OCI-LY7 (cell line): ENCODE measurements at regions of chr6 and their contacts with region 1.

Region 1: GRCh38 chr6:33585403-33586107 is 5.5 kb upstream of the BAK1 start:
- DNase-seq: peak; percentile 93
- H3K4me3 ChIP-seq: peak overlapping the region; percentile 45
- H3K27ac ChIP-seq: peak overlapping the region; percentile 7
- H3K4me1 ChIP-seq: peaks cover 48% of the 10 kb centered on the region
- CTCF ChIP-seq: peak; percentile 97

Region 2: DNA sequence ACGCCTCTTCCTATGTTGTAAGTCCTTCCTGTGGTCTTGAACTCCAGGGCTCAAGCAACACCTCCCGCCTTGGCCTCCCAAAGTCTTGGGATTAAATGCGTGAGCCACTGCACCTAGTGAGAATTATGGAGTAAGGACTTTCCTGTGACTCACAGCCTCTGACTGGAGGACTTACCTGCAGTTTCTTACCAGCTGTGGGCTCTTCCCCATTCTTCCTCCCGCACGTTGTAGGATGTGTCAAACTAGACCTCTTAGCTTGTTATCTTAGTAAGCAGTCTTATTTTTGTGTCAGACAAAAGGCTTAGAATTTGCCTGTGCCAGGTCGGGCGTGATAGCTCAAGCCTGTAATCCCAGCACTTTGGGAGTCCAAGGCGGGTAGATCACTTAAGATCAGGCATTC is 36.4 kb before region 1 on chr6:
- CTCF ChIA-PET with region 1: no interaction called
- POLR2A ChIA-PET with region 1: no interaction called
- intact Hi-C with region 1: no loop called
- DNase-seq: no peak
- H3K4me3 ChIP-seq: no peak overlapping the region
- H3K27ac ChIP-seq: no peak overlapping the region
- H3K4me1 ChIP-seq: peaks cover 14% of the 10 kb centered on the region
- CTCF ChIP-seq: no peak

Region 3: GRCh38 chr6:33607784-33608161 is 22.2 kb after region 1 on chr6:
- CTCF ChIA-PET with region 1: interaction called, 24 read pairs
- POLR2A ChIA-PET with region 1: interaction called, 4 read pairs
- intact Hi-C with region 1: loop called (anchors 2 kb)
- DNase-seq: peak; percentile 68
- H3K4me3 ChIP-seq: no peak overlapping the region
- H3K27ac ChIP-seq: no peak overlapping the region
- H3K4me1 ChIP-seq: peaks cover 20% of the 10 kb centered on the region
- CTCF ChIP-seq: peak; percentile 84

Region 4: DNA sequence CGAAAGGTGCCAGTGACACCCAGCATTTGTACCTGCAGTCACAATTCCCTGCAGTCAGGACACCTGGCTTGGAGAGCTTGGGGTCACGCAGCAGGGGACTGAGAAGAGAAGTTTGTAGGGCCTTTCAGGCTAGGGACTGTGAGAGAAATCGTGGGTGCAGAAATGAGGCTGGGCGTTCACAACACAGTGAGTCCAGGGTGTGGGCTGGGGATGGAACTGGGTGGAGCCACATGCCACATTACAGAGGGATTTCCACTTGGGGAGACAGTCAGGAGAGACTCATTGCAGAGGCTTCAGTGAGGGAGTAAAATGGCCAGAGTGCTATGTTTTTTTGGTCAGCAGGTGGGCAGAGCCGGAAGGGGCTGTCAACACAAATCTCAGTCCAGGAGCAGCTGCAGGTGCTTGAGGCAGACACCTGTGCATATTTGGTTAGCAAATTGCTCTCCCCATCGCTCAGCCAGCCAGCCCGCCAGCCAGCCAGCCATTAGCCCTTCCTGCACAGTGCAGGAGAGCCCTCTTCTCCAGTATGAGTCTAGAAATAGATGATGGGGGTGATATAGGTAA is 42.9 kb after region 1 on chr6:
- CTCF ChIA-PET with region 1: no interaction called
- POLR2A ChIA-PET with region 1: interaction called, 4 read pairs
- intact Hi-C with region 1: loop called (anchors 2 kb)
- DNase-seq: peak; percentile 85
- H3K4me3 ChIP-seq: peak overlapping the region; percentile 54
- H3K27ac ChIP-seq: peak overlapping the region; percentile 85
- H3K4me1 ChIP-seq: peaks cover 88% of the 10 kb centered on the region
- CTCF ChIP-seq: no peak

Region 5: DNA sequence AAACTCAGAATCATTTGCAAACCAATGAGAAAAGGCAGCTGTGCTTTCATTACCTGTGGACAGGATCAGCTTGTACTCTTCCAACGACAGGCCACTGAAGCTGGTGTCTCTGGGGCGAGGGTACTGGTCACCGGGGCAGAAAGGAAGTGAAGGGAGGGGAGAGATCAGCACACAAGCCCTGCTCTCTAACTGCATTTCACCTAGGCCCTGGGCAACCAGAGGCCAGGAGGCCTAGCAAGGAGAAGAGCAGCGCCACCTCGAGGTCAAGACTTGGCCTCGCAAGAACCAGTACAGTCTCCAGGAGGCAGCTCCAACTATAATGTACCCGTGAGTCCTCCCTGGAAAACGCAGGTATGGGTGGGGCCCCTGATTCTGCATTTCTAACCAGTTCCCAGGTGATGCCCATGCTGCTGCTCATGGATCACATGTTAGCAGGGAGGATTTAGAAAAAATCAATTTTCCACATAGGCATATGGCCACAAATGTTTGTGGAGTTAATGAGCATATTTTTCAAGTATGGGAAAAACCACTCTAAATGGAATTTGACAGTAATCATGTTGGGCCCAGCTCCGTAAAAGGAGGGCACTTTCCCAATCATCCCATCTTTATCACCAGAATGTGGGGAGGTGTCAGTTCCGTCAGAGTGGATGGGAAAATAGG is 115.0 kb after region 1 on chr6:
- CTCF ChIA-PET with region 1: interaction called, 4 read pairs
- POLR2A ChIA-PET with region 1: interaction called, 3 read pairs
- intact Hi-C with region 1: loop called (anchors 1 kb)
- DNase-seq: peak; percentile 87
- H3K4me3 ChIP-seq: no peak overlapping the region
- H3K27ac ChIP-seq: peak overlapping the region; percentile 14
- H3K4me1 ChIP-seq: peaks cover 38% of the 10 kb centered on the region
- CTCF ChIP-seq: peak; percentile 93

Region 6: GRCh38 chr6:33761922-33762629 is 176.5 kb after region 1 on chr6:
- CTCF ChIA-PET with region 1: no interaction called
- POLR2A ChIA-PET with region 1: no interaction called
- intact Hi-C with region 1: loop called (anchors 5 kb)
- DNase-seq: peak; percentile 52
- H3K4me3 ChIP-seq: no peak overlapping the region
- H3K27ac ChIP-seq: no peak overlapping the region
- H3K4me1 ChIP-seq: no peaks in the 10 kb centered on the region
- CTCF ChIP-seq: peak; percentile 75